HepG2 (cell line): ENCODE measurements at regions of chr1 and their contacts with region 1.

Region 1: GRCh38 chr1:23422241-23423030 is 2.1 kb downstream of the TCEA3 start:
- DNase-seq: no peak
- ATAC-seq: no peak
- H3K4me3 ChIP-seq: 0 out of 6 replicates have a peak overlapping the region, but pooled peaks of 1 of the 3 experiments have one; percentile 88
- H3K27ac ChIP-seq: peak overlapping the region; percentile 92
- H3K4me1 ChIP-seq: peaks cover 79% of the 10 kb centered on the region
- H3K27me3 ChIP-seq: no peaks in the 10 kb centered on the region
- CTCF ChIP-seq: no peak
- EP300 ChIP-seq: no peak
- POLR2A ChIP-seq: no peak
- RAD21 ChIP-seq: no peak

Region 2: DNA sequence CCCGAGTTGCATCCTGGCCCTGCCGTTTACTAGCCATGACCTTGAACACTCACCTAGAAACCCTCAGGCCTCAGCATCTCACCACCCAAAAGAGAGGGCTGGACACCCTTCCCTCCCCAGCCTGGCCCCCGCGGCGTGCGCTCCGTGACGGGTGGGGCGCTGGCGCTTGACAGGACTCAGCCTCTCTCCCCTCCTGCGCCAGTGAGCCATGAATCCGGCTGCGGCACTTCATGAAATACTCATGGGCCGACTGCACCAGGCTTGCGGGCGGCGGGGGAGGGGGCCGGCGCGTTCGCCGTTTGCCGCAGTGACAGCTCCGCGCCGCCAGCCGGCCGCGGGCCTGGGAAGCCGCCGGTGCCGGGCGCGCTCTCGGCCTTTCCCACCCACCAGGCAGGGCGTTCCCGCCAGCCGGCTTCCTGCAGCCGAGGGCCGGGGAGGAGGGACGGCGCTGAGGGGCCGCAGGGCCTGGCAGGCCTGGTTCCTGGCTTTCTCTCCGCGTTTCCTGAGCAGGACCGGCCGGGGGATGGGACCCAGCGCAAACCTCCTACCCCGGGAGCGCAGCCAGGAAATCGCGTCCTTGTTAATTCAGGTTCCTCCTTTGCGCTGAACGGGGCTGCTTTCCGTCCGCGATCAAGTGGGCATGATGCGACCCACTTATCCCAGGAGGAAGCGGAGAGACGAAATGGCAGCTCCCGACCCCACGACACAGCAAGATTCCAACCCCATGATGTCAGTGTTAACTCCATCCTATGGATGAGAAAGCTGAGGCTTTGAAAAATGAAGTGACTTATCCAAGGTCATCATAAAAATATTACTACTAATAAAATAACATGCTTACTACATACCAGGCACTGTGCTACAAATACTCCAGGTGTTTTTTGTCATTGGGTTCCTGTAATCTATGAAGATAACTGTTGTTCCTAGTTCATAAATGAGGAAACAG is 244.7 kb before region 1 on chr1:
- CTCF ChIA-PET with region 1: no interaction called
- POLR2A ChIA-PET with region 1: no interaction called
- in situ Hi-C with region 1: no loop called
- intact Hi-C with region 1: no loop called
- DNase-seq: peak; percentile 25
- ATAC-seq: peak; percentile 90
- H3K4me3 ChIP-seq: peak overlapping the region; percentile 64 to 84 (median 75)
- H3K27ac ChIP-seq: no peak overlapping the region
- H3K4me1 ChIP-seq: peaks cover 54% of the 10 kb centered on the region
- H3K27me3 ChIP-seq: peaks cover 0 to 8% of the 10 kb centered on the region in 2 experiments; a peak in 2 of 5 replicates
- CTCF ChIP-seq: peak; percentile 30; the same call in 1 of the 2 replicates
- EP300 ChIP-seq: no peak
- POLR2A ChIP-seq: no peak
- RAD21 ChIP-seq: peak; percentile 56

Region 3: DNA sequence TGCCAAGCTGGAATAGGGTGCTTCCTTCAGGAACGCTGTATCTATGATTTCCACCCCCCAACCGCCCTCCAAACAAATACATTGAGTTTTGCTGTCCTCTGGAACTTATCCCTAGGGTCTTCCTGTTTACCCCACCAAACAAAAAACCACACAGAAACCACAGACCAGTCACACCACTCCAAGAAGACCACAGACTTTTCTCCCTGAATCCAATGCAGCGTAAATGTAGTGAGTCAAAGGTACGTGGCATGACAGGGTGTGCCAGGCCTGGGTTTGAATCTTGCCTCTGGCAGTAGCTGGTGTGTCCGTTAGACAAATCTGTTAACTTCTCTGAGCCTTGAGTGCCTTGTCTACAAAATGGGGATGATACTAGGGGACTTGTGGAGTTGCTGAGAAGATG is 33.8 kb after region 1 on chr1:
- CTCF ChIA-PET with region 1: no interaction called
- POLR2A ChIA-PET with region 1: interaction called, 22 read pairs
- in situ Hi-C with region 1: no loop called
- intact Hi-C with region 1: no loop called
- DNase-seq: no peak
- ATAC-seq: no peak
- H3K4me3 ChIP-seq: no peak overlapping the region
- H3K27ac ChIP-seq: no peak overlapping the region
- H3K4me1 ChIP-seq: peaks cover 74% of the 10 kb centered on the region
- H3K27me3 ChIP-seq: no peaks in the 10 kb centered on the region
- CTCF ChIP-seq: no peak
- EP300 ChIP-seq: no peak
- POLR2A ChIP-seq: no peak
- RAD21 ChIP-seq: no peak

Region 4: DNA sequence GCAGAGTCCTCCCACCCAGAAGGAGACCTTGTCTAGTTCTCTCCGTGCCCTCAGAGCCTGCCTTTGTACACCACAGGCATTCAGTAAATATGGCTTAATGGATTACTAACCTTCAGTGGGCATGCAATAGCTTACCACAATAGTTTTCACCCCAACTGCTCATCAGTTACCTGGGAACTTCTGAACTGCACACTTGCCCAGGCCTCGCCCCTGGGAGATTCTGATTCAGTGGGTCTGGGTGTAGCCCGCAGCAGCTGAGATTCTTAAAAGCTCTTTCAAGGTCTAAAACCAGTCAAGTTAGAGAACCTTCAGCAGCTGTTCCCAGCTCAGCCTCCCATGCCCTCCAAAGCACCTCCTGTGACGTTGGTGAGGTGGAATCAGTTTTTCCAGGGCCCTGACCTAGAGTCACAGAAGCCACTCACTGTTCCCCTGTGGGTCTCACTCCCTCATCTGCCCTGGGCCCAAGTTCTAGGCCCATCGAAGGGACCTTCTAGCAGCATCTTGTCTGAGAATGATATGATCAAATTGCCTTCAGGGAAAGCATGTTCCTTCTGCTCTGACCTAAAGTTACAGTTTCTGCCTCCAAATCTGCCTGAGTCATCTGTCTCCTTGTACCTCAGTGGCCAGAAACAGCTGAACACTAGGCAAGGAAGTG is 50.7 kb after region 1 on chr1:
- CTCF ChIA-PET with region 1: no interaction called
- POLR2A ChIA-PET with region 1: interaction called, 4 read pairs
- in situ Hi-C with region 1: no loop called
- intact Hi-C with region 1: loop called (anchors 1 kb)
- DNase-seq: peak; percentile 74
- ATAC-seq: peak; percentile 73
- H3K4me3 ChIP-seq: no peak overlapping the region; a peak in 1 of 6 replicates
- H3K27ac ChIP-seq: peak overlapping the region; percentile 71
- H3K4me1 ChIP-seq: peaks cover 71% of the 10 kb centered on the region
- H3K27me3 ChIP-seq: no peaks in the 10 kb centered on the region
- CTCF ChIP-seq: no peak
- EP300 ChIP-seq: no peak
- POLR2A ChIP-seq: no peak
- RAD21 ChIP-seq: no peak

Region 5: DNA sequence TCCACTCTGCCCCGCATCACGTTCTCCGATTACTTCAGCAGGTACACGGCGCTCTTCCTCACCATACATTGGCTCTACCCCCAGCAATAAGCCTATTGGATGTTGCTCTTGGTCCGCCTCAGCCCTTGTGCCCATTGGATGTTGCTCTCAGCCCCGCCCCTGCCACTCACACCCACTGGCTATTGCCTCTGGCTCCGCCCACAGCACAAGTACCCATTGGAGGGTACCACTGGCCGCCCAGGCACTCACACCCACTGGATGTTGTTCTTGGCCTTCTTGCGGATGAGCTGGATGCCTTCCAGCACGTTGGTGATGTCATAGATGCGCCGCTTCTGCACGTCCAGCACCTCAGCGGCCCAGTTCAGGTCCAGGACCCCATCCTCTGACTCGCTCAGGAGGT is 99.2 kb after region 1 on chr1:
- CTCF ChIA-PET with region 1: no interaction called
- POLR2A ChIA-PET with region 1: no interaction called
- in situ Hi-C with region 1: no loop called
- intact Hi-C with region 1: no loop called
- DNase-seq: no peak
- ATAC-seq: peak; percentile 38; the same call in 1 of the 3 replicates
- H3K4me3 ChIP-seq: no peak overlapping the region
- H3K27ac ChIP-seq: no peak overlapping the region
- H3K4me1 ChIP-seq: no peaks in the 10 kb centered on the region
- H3K27me3 ChIP-seq: no peaks in the 10 kb centered on the region
- CTCF ChIP-seq: no peak
- EP300 ChIP-seq: no peak
- POLR2A ChIP-seq: no peak
- RAD21 ChIP-seq: no peak